ENCODE measurements at regions of chr16 and their contacts with region 1.

Region 1: DNA sequence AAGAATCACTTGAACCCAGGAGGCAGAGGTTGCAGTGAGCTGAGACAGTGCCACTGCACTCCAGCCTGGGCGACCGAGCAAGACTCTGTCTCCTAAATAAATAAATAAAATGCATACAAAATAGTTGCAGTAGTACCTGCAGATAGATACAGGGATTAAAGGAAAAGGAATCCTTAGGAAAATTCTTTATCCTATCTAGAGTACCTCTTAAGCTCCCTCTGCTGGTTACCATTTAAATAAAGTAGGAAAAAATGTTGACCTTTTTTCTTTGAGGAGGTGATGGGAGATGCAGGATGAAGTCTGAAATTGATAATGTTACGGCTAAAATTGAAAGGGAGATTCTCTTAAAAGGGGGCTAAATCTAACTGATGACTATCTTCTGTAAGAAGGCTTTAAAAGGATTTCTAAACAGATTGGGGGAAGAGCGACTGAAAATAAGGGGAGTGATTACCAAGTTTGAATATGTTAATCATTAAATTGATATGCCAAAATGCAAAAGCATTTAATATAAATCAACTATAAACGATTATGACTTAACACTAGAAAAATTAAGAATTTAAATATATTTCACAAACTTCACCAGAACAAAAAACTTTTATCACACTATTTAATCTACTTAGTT is 29.4 kb downstream of the C16orf87 start:
- DNase-seq: no peak

Region 2: DNA sequence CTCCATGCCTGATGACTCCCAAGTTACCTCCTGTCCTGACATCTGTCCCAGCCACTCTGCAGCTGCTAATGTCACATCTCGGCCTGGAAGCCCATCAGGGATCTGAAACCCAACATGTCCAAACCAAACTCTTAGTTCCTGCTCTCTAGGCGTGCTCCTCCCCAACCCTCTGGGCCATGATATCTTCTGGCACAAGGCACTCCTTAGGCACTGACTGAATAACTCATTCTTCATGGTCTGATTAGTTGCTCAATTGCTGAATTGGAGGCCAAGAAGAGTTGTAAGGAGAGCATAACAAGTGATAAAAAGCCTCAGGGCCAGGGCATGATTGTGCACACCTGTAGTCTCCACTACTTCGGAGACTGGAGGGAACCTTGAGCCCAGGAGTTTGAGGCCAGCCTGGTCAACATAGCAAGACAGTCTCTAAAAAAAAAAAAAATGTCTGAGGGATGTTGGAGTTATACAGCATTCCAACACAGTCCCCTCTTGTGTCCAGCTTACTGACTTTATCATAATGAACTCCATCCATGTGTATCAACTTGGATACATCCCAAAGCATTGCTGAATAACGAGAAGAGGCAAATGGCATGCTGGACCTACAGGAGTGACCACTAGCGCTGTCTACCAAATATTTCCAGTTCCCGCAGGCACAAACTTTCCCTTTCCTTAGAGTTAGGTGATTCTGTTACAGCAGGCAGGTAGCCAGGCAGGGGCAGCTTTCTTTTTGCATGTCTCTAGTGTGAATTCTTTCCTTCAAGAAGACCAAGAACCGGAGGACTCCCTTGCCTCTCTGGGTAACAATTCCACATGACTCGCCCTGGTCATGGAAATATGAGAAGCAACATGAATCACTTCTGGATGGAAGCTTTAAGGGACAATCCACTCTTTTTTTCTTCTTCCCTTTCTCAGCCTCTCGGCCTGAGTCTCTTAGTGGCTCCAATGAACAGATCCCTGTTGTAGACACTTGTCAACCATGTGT is 162.3 kb before region 1 on chr16:
- intact Hi-C with region 1: no loop called
- DNase-seq: no peak

Region 3: GRCh38 chr16:46689365-46690280 is 111.9 kb before region 1 on chr16 and contains the start of gene ORC6:
- intact Hi-C with region 1: loop called (anchors 10 kb)
- DNase-seq: peak; percentile 96 to 100 (median 98)

Measured in posterior cingulate gyrus (tissue), 11 donors.